ENCODE measurements at regions of chr22 and their contacts with region 1.

Region 1: GRCh38 chr22:21834869-21835268 is 32.6 kb downstream of the MAPK1 start:
- DNase-seq: no peak
- ATAC-seq: no peak
- H3K4me3 ChIP-seq: no peak overlapping the region
- H3K27ac ChIP-seq: no peak overlapping the region
- H3K4me1 ChIP-seq: no peaks in the 10 kb centered on the region; the same call in none of the 2 replicates
- H3K27me3 ChIP-seq: no peaks in the 10 kb centered on the region
- CTCF ChIP-seq: no peak

Region 2: DNA sequence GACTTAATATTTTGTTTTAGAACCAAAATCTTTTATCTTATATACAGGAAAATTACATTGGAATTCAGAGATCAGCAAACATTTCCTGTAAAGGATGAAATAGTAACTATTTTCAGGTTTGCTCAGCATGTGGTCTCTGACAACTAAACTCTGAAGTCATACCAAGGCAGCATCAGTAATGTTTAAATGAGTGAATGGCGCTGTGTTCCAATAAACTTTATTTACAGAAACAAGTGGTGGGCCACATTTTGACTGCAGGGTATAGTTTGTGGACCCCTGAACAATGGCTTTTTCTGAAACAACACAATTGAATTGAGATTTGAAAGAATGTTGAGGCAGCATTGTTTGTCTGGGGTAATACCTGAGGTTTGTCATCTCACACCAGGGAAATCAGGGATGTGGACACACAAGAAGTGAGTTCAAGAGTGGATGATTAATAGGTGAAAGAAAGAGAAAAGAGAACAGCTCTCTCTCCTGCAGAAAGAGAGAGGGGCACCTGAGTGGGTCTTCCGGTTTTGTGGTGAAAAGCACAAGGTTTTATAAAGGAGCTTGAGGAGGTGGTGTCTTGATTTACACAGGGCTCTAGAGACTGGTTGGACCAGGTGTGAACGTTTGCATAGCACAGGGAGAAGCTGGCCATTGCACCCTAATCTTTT is 296.2 kb after region 1 on chr22:
- CTCF ChIA-PET with region 1: no interaction called
- POLR2A ChIA-PET with region 1: interaction called, 10 read pairs
- in situ Hi-C with region 1: no loop called
- intact Hi-C with region 1: no loop called
- DNase-seq: no peak
- ATAC-seq: no peak
- H3K4me3 ChIP-seq: no peak overlapping the region
- H3K27ac ChIP-seq: no peak overlapping the region
- H3K4me1 ChIP-seq: no peaks in the 10 kb centered on the region
- H3K27me3 ChIP-seq: no peaks in the 10 kb centered on the region
- CTCF ChIP-seq: no peak

Region 3: GRCh38 chr22:22410677-22411076 is 575.8 kb after region 1 on chr22:
- CTCF ChIA-PET with region 1: no interaction called
- POLR2A ChIA-PET with region 1: no interaction called
- in situ Hi-C with region 1: no loop called
- intact Hi-C with region 1: no loop called
- DNase-seq: no peak
- ATAC-seq: no peak
- H3K4me3 ChIP-seq: no peak overlapping the region
- H3K27ac ChIP-seq: no peak overlapping the region
- H3K4me1 ChIP-seq: no peaks in the 10 kb centered on the region
- H3K27me3 ChIP-seq: peaks cover 7% of the 10 kb centered on the region; the same call in 1 of the 2 replicates
- CTCF ChIP-seq: no peak